HAP-1 (cell line): ENCODE measurements at regions of chr18 and their contacts with region 1.

Region 1: GRCh38 chr18:50992351-50992762 is 24.5 kb downstream of the ELAC1 start:
- DNase-seq: no peak
- H3K4me3 ChIP-seq: no peak overlapping the region
- H3K4me1 ChIP-seq: no peaks in the 10 kb centered on the region
- H3K27me3 ChIP-seq: no peaks in the 10 kb centered on the region

Region 2: DNA sequence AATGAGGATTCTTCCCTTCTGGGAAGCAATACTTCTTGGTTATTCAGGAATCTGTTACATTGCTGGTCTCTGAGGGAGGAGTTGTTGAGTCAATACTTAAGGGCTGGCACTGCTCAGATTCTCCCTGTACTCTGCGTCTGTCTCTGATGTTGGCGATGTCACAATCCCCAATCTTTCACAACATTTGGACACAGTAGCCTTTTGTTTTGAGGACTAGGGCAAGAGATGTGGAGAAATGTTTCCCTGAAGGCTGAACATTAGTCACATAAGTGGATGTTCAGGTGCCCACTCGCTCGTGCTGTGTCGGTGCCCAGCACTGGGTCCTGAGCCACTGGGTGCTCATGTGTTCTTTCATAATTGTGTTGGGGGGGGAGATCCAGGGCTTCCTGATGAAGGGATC is 377.5 kb before region 1 on chr18:
- in situ Hi-C with region 1: no loop called
- DNase-seq: no peak
- H3K4me3 ChIP-seq: no peak overlapping the region
- H3K4me1 ChIP-seq: no peaks in the 10 kb centered on the region
- H3K27me3 ChIP-seq: no peaks in the 10 kb centered on the region

Region 3: GRCh38 chr18:50933684-50934083 is 58.7 kb before region 1 on chr18:
- in situ Hi-C with region 1: loop called (anchors 10 kb)
- DNase-seq: no peak
- H3K4me3 ChIP-seq: no peak overlapping the region
- H3K4me1 ChIP-seq: peaks cover 5% of the 10 kb centered on the region; the same call in 1 of the 2 replicates
- H3K27me3 ChIP-seq: no peaks in the 10 kb centered on the region